ENCODE measurements at regions of chr12 and their contacts with region 1.

Region 1: GRCh38 chr12:104775731-104776247 is 182.3 kb downstream of the SLC41A2 start:
- DNase-seq: no peak
- H3K4me3 ChIP-seq: no peak overlapping the region
- H3K27ac ChIP-seq: no peak overlapping the region
- H3K4me1 ChIP-seq: no peaks in the 10 kb centered on the region
- H3K27me3 ChIP-seq: peaks cover 6% of the 10 kb centered on the region in 2 experiments
- CTCF ChIP-seq: no peak
- POLR2A ChIP-seq: no peak

Region 2: GRCh38 chr12:104790296-104791125 is 14.7 kb after region 1 on chr12:
- CTCF ChIA-PET with region 1: interaction called, 26 read pairs
- POLR2A ChIA-PET with region 1: no interaction called
- dilution Hi-C with region 1: no loop called
- intact Hi-C with region 1: no loop called
- DNase-seq: peak; percentile 24
- H3K4me3 ChIP-seq: no peak overlapping the region
- H3K27ac ChIP-seq: no peak overlapping the region
- H3K4me1 ChIP-seq: no peaks in the 10 kb centered on the region
- H3K27me3 ChIP-seq: no peaks in the 10 kb centered on the region
- CTCF ChIP-seq: peak; percentile 81 to 83
- POLR2A ChIP-seq: no peak

Region 3: DNA sequence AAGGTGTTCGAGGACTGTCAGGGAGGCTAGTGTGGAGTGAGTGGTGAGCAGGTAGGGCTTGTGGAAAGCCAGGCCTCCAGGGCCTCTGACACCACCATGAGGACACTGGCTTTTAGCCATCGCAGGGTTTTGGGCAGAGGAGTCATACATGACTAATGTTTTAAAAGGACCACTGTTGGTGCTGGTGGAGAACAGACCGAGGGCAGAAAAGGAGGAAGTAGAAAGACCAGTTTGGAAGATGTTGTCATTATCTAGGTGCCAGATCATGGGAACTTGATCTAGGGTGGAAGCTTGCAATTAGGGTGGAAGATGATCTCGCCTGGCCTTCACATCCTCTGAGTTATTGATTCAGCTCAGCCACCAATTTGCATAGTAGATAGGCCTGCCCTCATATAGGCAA is 698.9 kb after region 1 on chr12:
- CTCF ChIA-PET with region 1: no interaction called
- POLR2A ChIA-PET with region 1: no interaction called
- dilution Hi-C with region 1: no loop called
- intact Hi-C with region 1: no loop called
- DNase-seq: peak; percentile 62
- H3K4me3 ChIP-seq: no peak overlapping the region
- H3K27ac ChIP-seq: peak overlapping the region; percentile 4
- H3K4me1 ChIP-seq: peaks cover 67% of the 10 kb centered on the region
- H3K27me3 ChIP-seq: no peaks in the 10 kb centered on the region
- CTCF ChIP-seq: no peak
- POLR2A ChIP-seq: no peak

Measured in endothelial cell of umbilical vein (primary cell).